ENCODE measurements at regions of chr21 and their contacts with region 1.

Region 1: GRCh38 chr21:14864211-14865021 is 200.4 kb downstream of the NRIP1 start:
- DNase-seq: peak in 7 of 9 donors; percentile 13 to 31 (median 24)
- ATAC-seq: peak; percentile 72
- H3K4me3 ChIP-seq: no peak overlapping the region
- H3K4me3 Mint-ChIP-seq: no peak overlapping the region
- H3K27ac ChIP-seq: no peak overlapping the region
- H3K27ac Mint-ChIP-seq: no peak overlapping the region
- H3K4me1 ChIP-seq: no peaks in the 10 kb centered on the region
- H3K4me1 Mint-ChIP-seq: peaks cover 0 to 12% (median 3%) of the 10 kb centered on the region in 7 donors
- H3K27me3 ChIP-seq: no peaks in the 10 kb centered on the region
- H3K27me3 Mint-ChIP-seq: peaks cover 0 to 5% (median 0%) of the 10 kb centered on the region in 5 donors

Region 2: DNA sequence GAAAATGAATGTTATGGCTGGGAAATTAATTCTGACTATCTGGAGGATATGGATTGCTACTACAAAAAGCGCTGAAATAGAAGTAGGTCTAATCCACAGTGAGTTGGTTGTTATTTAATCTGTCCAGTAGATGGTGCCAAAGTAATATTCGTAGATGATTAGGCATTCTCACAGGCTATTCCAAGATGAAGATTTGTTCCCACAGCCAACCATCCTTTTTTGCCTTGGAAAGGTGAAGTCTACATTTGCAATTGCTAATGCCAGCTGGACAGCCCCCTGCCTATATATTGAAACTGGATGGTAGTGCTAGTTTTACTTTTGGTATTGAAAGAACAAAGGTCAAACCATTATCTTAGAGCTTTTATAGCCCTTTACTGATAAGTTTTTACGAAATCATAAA is 604.7 kb before region 1 on chr21:
- CTCF ChIA-PET with region 1: no interaction called
- POLR2A ChIA-PET with region 1: no interaction called
- intact Hi-C with region 1: loop called (anchors 1 to 5 kb)
- DNase-seq: peak in 5 of 9 donors; percentile 13 to 28 (median 23)
- ATAC-seq: peak; percentile 59
- H3K4me3 ChIP-seq: no peak overlapping the region
- H3K4me3 Mint-ChIP-seq: no peak overlapping the region
- H3K27ac ChIP-seq: no peak overlapping the region
- H3K27ac Mint-ChIP-seq: no peak overlapping the region
- H3K4me1 ChIP-seq: no peaks in the 10 kb centered on the region
- H3K4me1 Mint-ChIP-seq: no peaks in the 10 kb centered on the region
- H3K27me3 ChIP-seq: no peaks in the 10 kb centered on the region
- H3K27me3 Mint-ChIP-seq: peaks cover 2 to 19% (median 12%) of the 10 kb centered on the region in 5 donors

Region 3: DNA sequence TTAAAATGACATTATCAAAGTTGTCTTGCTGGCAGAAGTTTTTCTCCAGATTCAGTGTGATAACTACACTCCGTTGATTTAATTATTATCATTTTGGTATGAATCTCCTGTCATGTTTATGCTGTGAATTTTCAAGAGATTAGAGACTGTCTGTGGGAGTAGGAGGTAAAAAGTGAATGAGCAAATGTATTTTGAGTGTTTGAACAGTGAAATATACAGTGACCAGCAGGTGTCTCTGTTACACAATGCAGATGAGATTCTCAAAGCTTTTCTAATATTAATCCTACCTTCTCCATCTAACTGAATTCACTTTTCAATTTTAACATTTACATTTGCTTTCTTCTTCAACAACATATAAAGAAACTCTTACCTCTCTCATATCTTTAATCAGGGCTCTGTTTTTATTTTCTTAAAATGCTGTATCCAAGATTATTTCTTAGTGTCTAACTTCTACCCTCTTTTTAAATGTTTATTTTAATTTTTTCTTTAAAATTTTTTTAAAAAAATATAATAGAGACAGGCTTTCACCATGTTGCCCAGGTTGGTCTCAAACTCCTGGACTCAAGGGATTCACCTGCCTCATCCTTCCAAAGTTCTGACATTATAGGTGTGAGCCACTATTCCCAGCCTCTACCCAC is 460.6 kb before region 1 on chr21:
- CTCF ChIA-PET with region 1: no interaction called
- POLR2A ChIA-PET with region 1: no interaction called
- intact Hi-C with region 1: loop called (anchors 1 kb)
- DNase-seq: peak in 5 of 9 donors; percentile 19 to 55 (median 39)
- ATAC-seq: peak; percentile 79
- H3K4me3 ChIP-seq: no peak overlapping the region
- H3K4me3 Mint-ChIP-seq: no peak overlapping the region
- H3K27ac ChIP-seq: no peak overlapping the region
- H3K27ac Mint-ChIP-seq: no peak overlapping the region
- H3K4me1 ChIP-seq: no peaks in the 10 kb centered on the region
- H3K4me1 Mint-ChIP-seq: no peaks in the 10 kb centered on the region
- H3K27me3 ChIP-seq: no peaks in the 10 kb centered on the region
- H3K27me3 Mint-ChIP-seq: peaks cover 0 to 1% (median 0%) of the 10 kb centered on the region in 5 donors

Measured in naive thymus-derived CD4-positive, alpha-beta T cell (primary cell).